ENCODE measurements at regions of chr19 and their contacts with region 1.

Region 1: DNA sequence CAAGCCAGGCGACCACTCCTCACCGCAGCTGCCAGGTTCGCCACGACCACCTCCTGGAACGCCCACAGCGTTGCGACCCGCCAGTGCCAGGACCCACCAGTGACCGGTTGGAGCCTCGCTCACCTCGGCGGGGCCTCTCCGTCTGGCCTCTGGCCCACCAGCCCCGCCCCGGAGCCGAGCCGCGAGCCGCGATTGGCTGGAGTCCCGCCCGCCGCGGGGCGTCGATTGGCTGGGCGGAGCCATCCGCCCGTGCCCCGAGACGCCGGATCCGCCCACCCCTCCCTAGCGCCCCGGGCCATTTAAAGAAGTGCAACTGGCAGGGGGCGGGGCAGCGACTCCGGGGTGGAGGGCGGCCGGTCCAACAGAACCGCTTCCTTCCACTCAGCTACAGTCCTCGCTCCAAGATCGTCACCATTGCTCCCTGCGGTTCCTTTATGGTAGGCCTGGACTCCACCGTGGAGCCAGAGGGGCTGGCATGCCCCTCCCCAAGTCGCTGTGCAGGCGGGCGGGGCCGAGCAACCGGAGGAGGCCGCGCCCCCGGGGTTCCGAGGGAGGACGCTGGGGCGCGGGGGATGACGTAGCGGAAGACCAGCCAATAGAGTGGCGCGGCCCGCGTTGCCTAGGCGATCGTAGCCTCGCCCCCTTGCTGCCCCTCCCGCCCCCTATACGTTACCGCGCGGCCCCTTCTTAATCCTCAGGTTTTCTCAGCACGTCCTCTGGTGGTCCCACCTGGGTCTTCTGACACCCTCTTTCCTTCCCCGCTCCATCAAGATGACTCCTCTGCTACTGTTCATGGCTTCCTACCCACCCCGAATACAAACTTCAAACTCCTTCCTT is at the start of gene SERTAD3:
- DNase-seq: peak; percentile 95 to 97
- ATAC-seq: peak; percentile 72 to 73
- H3K4me3 ChIP-seq: peak within 1 kb of the TSS; percentile 77 to 98 (median 92)
- H3K27ac ChIP-seq: peak within 1 kb of the TSS; percentile 96 to 99 (median 99)
- H3K4me1 ChIP-seq: peaks cover 15 to 24% of the 10 kb centered on the region in 2 donors
- H3K27me3 ChIP-seq: no peaks in the 10 kb centered on the region
- CTCF ChIP-seq: peak in 2 of 5 experiments; percentile 16 to 22
- POLR2A ChIP-seq: peak; percentile 99
- total RNA-seq, gene SERTAD3: 12.7 to 24.4 (median 18.1) TPM

Region 2: GRCh38 chr19:40425450-40426287 is 18.7 kb before region 1 on chr19 and contains the start of gene SERTAD1:
- in situ Hi-C with region 1: no loop called
- intact Hi-C with region 1: loop called (anchors 1 kb)
- DNase-seq: peak; percentile 99 to 100
- ATAC-seq: peak; percentile 82 to 87
- H3K4me3 ChIP-seq: peak within 1 kb of the TSS; percentile 78 to 94 (median 84)
- H3K27ac ChIP-seq: peak within 1 kb of the TSS; percentile 98 to 100 (median 99)
- H3K4me1 ChIP-seq: peaks cover 32 to 34% of the 10 kb centered on the region in 2 donors
- H3K27me3 ChIP-seq: no peaks in the 10 kb centered on the region
- CTCF ChIP-seq: peak in 4 of 5 experiments; percentile 66 to 97 (median 90)
- POLR2A ChIP-seq: peak; percentile 100
- total RNA-seq, gene SERTAD1: 15.3 to 18.3 (median 16.0) TPM

Region 3: DNA sequence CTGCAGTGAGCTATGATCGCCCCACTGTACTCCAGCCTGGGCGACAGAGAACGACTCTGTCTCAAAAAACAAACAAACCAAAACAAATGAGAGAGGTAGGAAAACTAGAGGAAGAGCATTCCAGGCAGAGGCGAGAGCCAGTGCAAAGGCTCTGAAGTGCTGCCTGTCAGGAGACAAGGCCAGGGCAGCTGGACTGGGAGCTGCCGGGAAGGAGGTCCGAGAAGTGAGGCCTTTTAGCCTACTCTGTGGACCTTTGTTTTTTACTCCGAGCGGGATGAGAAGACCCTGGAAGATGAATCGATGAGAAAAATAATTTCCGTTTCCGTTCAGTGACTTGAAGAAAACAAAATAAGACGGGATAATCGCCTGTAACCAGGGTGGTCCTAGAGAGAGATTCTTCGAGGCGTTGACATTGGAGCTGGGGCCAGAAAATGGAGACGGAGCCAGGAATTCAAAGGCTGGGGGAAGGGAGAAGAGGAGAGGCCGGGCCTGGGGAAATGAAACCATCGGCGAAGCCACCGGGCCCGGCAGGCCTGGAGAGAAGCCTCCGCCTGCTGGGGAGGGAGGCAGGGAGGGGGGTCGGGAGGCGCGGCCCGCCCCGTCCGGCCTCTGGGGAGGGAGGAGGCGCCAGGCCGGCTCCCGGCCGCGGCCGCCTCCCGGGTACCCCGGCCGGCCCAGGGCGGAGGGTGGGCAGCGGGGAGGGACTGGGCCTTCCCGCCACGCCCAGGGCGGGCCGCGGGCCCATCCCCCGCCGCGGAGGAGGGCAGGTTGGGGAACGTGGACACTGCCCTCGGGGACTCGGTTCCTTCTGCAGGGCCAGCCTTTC is 10.8 kb before region 1 on chr19:
- in situ Hi-C with region 1: no loop called
- intact Hi-C with region 1: loop called (anchors 1 kb)
- DNase-seq: peak; percentile 78 to 87
- ATAC-seq: peak; percentile 91
- H3K4me3 ChIP-seq: peak overlapping the region; percentile 53 to 63 (median 58)
- H3K27ac ChIP-seq: peak overlapping the region; percentile 90 to 97 (median 92)
- H3K4me1 ChIP-seq: peaks cover 7 to 16% of the 10 kb centered on the region in 2 donors
- H3K27me3 ChIP-seq: no peaks in the 10 kb centered on the region
- CTCF ChIP-seq: peak in 1 of 5 experiments; percentile 14
- POLR2A ChIP-seq: peak; percentile 63 to 70